Activated CD4-positive, alpha-beta T cell treated with anti-CD3 and anti-CD28 coated beads, Interleukin-2, amount 10 ng/mL, durations not matched to agents 7 days and 5 days (primary cell): ENCODE measurements at regions of chr11 and their contacts with region 1.

Region 1: DNA sequence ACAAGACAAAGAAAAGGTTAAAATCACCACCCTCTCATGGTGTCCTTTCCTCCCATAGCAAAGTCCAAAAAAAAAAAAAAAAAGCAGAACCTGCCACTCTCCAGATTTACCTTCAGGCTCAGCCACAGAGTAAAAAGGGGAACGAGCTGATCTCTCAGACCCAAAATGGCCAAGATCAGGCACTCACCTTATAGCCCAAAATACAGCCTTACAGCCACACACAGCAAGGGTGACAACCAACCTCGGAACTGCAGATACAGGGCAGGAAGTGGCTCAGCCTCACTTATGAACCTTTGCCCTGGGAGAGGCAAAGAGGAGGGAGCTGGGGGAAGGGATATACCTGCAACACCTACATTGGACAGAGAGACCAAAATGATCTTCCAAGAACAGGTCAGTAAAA is 4.5 kb downstream of the FHIP1B start:
- DNase-seq: peak; percentile 49
- H3K4me3 Mint-ChIP-seq: peak overlapping the region; percentile 26
- H3K27ac Mint-ChIP-seq: peak overlapping the region; percentile 14
- H3K4me1 Mint-ChIP-seq: peaks cover 49% of the 10 kb centered on the region
- H3K27me3 Mint-ChIP-seq: no peaks in the 10 kb centered on the region

Region 2: DNA sequence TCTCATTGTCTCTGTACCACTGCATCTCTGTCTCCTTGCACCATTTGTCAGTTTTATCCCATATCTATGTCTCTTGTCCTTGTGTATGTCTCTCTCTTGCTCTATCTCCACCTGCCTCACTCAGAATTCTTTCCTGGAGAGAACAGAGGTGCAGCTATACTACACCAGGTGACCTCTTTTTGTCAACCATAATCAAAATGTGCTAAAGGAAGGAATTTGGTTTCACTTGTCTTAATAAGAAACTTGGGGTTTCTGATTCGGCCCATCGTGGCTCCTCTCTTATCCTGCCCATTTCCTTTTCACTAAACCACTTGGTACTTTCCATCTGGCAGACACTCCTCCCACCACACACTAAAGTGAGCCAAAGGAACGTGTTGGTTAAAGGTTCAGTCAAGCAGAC is 26.6 kb before region 1 on chr11:
- CTCF ChIA-PET with region 1: interaction called, 10 read pairs
- POLR2A ChIA-PET with region 1: no interaction called
- DNase-seq: peak; percentile 24
- H3K4me3 Mint-ChIP-seq: no peak overlapping the region
- H3K27ac Mint-ChIP-seq: peak overlapping the region; percentile 1
- H3K4me1 Mint-ChIP-seq: peaks cover 31% of the 10 kb centered on the region
- H3K27me3 Mint-ChIP-seq: no peaks in the 10 kb centered on the region

Region 3: DNA sequence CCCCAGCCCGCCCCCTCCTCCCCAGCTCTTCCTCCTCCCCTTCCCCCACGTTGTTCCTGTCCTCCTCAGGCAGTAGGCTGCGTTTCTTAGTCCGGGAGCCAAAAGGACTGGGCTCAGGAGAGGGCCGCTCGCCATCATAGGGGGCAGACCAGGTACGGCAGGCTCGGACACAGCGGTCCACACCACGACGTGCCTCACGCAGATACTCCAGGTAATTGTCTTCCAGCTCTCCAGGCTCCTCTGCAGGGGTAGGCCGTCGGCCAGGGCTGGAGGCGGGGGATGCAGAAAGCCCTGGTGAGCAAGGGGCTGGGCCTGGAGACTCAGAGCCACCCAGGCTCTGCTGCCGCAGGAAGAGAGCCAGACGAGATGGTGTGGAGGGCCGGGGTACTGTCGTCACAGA is 12.2 kb before region 1 on chr11:
- CTCF ChIA-PET with region 1: interaction called, 15 read pairs
- POLR2A ChIA-PET with region 1: no interaction called
- DNase-seq: no peak
- H3K4me3 Mint-ChIP-seq: no peak overlapping the region
- H3K27ac Mint-ChIP-seq: no peak overlapping the region
- H3K4me1 Mint-ChIP-seq: peaks cover 16% of the 10 kb centered on the region
- H3K27me3 Mint-ChIP-seq: no peaks in the 10 kb centered on the region